CD4-positive, alpha-beta memory T cell (primary cell): ENCODE measurements at regions of chr3 and their contacts with region 1.

Region 1: GRCh38 chr3:178436773-178437172 is 99.5 kb upstream of the KCNMB2 start:
- DNase-seq: peak in 1 of 5 donors; percentile 6
- H3K4me3 ChIP-seq: no peak overlapping the region
- H3K4me3 Mint-ChIP-seq: no peak overlapping the region
- H3K27ac ChIP-seq: no peak overlapping the region
- H3K27ac Mint-ChIP-seq: no peak overlapping the region
- H3K4me1 ChIP-seq: no peaks in the 10 kb centered on the region
- H3K4me1 Mint-ChIP-seq: no peaks in the 10 kb centered on the region
- H3K27me3 ChIP-seq: no peaks in the 10 kb centered on the region
- H3K27me3 Mint-ChIP-seq: peaks cover 0 to 2% of the 10 kb centered on the region in 2 donors

Region 2: DNA sequence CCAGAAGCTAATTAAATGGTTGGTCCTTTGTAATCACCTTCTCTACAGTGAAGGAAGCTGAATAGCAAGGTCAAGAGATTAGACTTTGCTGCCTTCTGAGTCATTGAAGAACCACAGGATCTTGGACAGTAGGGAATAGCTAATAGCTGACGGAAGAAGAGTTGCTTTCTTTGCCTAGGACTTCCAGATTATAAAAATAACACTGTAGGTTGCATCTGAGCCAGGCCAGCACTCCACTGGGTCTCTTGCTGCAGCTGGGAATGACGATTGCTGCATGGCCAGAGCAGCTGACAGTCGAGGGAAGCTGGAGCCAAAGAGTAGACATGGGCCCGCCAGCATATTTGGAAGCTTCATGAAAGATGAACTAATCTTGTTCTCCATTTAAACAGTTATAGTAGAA is 18.0 kb after region 1 on chr3:
- CTCF ChIA-PET with region 1: no interaction called
- POLR2A ChIA-PET with region 1: no interaction called
- intact Hi-C with region 1: no loop called
- DNase-seq: no peak
- H3K4me3 ChIP-seq: no peak overlapping the region
- H3K4me3 Mint-ChIP-seq: no peak overlapping the region
- H3K27ac ChIP-seq: no peak overlapping the region
- H3K27ac Mint-ChIP-seq: no peak overlapping the region
- H3K4me1 ChIP-seq: no peaks in the 10 kb centered on the region
- H3K4me1 Mint-ChIP-seq: peaks cover 0 to 2% (median 0%) of the 10 kb centered on the region in 4 donors
- H3K27me3 ChIP-seq: no peaks in the 10 kb centered on the region
- H3K27me3 Mint-ChIP-seq: peaks cover 2 to 6% of the 10 kb centered on the region in 2 donors

Region 3: GRCh38 chr3:178966299-178967176 is 529.8 kb after region 1 on chr3:
- CTCF ChIA-PET with region 1: interaction called, 3 read pairs
- POLR2A ChIA-PET with region 1: no interaction called
- intact Hi-C with region 1: loop called (anchors 2 kb)
- DNase-seq: peak in 4 of 5 donors; percentile 7 to 19 (median 10)
- H3K4me3 ChIP-seq: no peak overlapping the region
- H3K4me3 Mint-ChIP-seq: peak overlapping the region in 1 of 8 donors; percentile 53
- H3K27ac ChIP-seq: no peak overlapping the region
- H3K27ac Mint-ChIP-seq: peak overlapping the region in 1 of 7 donors; percentile 48
- H3K4me1 ChIP-seq: peaks cover 13% of the 10 kb centered on the region
- H3K4me1 Mint-ChIP-seq: peaks cover 10 to 15% (median 13%) of the 10 kb centered on the region in 4 donors
- H3K27me3 ChIP-seq: no peaks in the 10 kb centered on the region
- H3K27me3 Mint-ChIP-seq: no peaks in the 10 kb centered on the region

Region 4: GRCh38 chr3:179562591-179563270 is 1126.0 kb after region 1 on chr3 and contains the start of gene ACTL6A:
- CTCF ChIA-PET with region 1: no interaction called
- POLR2A ChIA-PET with region 1: no interaction called
- intact Hi-C with region 1: loop called (anchors 2 kb)
- DNase-seq: peak; percentile 96 to 98 (median 96)
- H3K4me3 ChIP-seq: peak within 1 kb of the TSS; percentile 67 to 76
- H3K4me3 Mint-ChIP-seq: peak within 1 kb of the TSS; percentile 96 to 100 (median 99)
- H3K27ac ChIP-seq: peak within 1 kb of the TSS; percentile 58
- H3K27ac Mint-ChIP-seq: peak within 1 kb of the TSS; percentile 81 to 98 (median 97)
- H3K4me1 ChIP-seq: peaks cover 29% of the 10 kb centered on the region
- H3K4me1 Mint-ChIP-seq: peaks cover 22 to 37% (median 28%) of the 10 kb centered on the region in 4 donors
- H3K27me3 ChIP-seq: no peaks in the 10 kb centered on the region
- H3K27me3 Mint-ChIP-seq: peaks cover 0 to 4% of the 10 kb centered on the region in 2 donors
- total RNA-seq, gene ACTL6A: 56.9 to 62.4 TPM